Activated CD4-positive, alpha-beta T cell treated with anti-CD3 and anti-CD28 coated beads for 36 hours (primary cell): ENCODE measurements at regions of chr12 and their contacts with region 1.

Region 1: GRCh38 chr12:54279866-54280467 is at the start of gene CBX5:
- DNase-seq: peak; percentile 100
- ATAC-seq: peak; percentile 50
- H3K4me3 Mint-ChIP-seq: no peak within 1 kb of the TSS
- H3K27ac Mint-ChIP-seq: no peak within 1 kb of the TSS
- H3K4me1 Mint-ChIP-seq: peaks cover 52% of the 10 kb centered on the region
- H3K27me3 Mint-ChIP-seq: no peaks in the 10 kb centered on the region
- total RNA-seq, gene CBX5: 140 to 146 TPM

Region 2: DNA sequence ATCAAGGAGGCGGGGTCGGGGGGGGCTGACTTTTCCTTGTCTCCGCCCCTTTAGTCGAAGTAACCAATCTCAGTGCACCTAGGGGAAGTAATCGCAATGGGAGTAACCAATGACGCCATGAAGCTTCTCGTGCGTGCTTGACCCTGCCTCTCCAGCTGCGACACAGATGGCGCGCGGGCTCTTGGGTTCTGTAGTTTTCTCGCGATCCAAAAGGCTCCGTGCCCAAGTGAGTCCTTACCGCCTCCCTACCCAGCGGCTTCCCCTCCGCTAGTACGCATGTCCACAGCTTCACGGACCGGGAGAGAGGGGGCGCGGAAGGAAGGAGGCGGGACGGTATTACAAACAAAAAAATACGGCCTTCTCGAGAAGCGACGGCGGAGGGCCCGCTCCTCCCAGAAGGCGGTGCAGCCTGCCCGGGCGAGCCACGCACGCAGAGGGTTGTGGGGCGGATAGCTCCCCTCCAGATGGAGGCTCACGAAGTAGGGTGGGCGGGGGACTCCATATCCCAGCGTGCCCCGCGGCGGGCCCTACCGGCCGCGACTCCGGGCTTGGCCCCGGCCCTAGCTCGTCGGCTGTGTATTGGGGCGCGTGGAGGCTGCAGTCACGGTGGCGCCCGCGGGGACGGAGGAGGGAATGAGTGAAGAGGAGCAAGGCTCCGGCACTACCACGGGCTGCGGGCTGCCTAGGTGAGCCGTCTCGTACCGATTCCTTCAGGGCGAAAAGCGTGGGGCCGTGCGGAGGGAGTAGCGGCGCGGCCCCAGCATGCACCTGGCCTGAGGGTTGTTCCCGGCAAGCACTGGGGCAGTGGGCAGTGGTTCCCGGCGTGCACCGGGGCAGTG is 779.0 kb before region 1 on chr12 and contains the start of gene TARBP2:
- CTCF ChIA-PET with region 1: no interaction called
- POLR2A ChIA-PET with region 1: no interaction called
- intact Hi-C with region 1: loop called (anchors 2 kb)
- DNase-seq: peak; percentile 98
- ATAC-seq: peak; percentile 84
- H3K4me3 Mint-ChIP-seq: peak within 1 kb of the TSS; percentile 81
- H3K27ac Mint-ChIP-seq: peak within 1 kb of the TSS; percentile 98
- H3K4me1 Mint-ChIP-seq: peaks cover 31% of the 10 kb centered on the region
- H3K27me3 Mint-ChIP-seq: no peaks in the 10 kb centered on the region
- total RNA-seq, gene TARBP2: 28.3 to 30.2 TPM

Region 3: GRCh38 chr12:53952871-53953734 is 326.9 kb before region 1 on chr12:
- CTCF ChIA-PET with region 1: no interaction called
- POLR2A ChIA-PET with region 1: no interaction called
- intact Hi-C with region 1: no loop called
- DNase-seq: no peak
- ATAC-seq: no peak
- H3K4me3 Mint-ChIP-seq: no peak overlapping the region
- H3K27ac Mint-ChIP-seq: no peak overlapping the region
- H3K4me1 Mint-ChIP-seq: peaks cover 12% of the 10 kb centered on the region
- H3K27me3 Mint-ChIP-seq: peaks cover 85% of the 10 kb centered on the region

Region 4: GRCh38 chr12:54191550-54192022 is 88.4 kb before region 1 on chr12:
- CTCF ChIA-PET with region 1: no interaction called
- POLR2A ChIA-PET with region 1: no interaction called
- intact Hi-C with region 1: loop called in 1 of 2 experiments (anchors 1 kb)
- DNase-seq: peak; percentile 87
- ATAC-seq: peak; percentile 60
- H3K4me3 Mint-ChIP-seq: no peak overlapping the region
- H3K27ac Mint-ChIP-seq: no peak overlapping the region
- H3K4me1 Mint-ChIP-seq: peaks cover 17% of the 10 kb centered on the region
- H3K27me3 Mint-ChIP-seq: peaks cover 35% of the 10 kb centered on the region

Region 5: DNA sequence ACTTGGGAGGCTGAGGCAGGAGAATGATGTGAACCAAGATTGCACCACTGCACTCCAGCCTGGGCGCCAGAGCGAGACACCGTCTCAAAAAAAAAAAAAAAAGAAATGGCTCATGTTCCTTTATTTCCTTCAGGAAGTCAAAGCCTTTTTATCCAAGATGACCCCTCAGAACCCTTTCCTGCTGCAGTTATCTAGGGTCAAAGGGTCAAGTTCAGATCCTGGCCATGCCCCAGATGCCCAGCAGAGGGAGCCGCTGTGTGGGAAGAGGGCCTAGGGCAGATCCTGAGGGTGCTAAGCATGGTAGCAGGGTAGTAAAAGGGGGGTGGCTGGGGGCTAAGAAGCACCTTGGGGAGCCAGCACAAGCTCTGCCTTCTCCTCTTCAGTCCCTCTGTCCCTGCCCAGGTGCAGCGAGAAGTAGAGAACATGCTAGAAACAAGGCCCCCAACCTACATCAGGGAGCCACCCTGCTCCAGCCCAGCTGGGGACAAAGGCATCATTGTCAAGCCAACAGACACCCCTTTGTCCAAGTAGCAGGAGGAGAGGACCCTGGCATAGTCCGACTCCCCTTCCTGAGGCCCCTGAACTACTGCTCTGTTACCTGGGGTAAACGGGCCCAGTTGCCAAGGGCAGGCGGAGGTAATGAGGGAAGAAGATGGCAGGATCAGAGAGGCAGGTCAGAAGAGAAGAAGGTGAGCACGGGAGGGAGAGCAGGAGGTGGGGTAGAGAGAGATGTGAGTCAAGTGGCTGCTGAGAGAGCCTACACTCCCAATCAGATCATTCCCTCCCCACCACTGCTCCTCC is 14.4 kb after region 1 on chr12:
- CTCF ChIA-PET with region 1: interaction called, 16 read pairs
- POLR2A ChIA-PET with region 1: interaction called, 7 read pairs
- intact Hi-C with region 1: no loop called
- DNase-seq: peak; percentile 83
- ATAC-seq: peak; percentile 82
- H3K4me3 Mint-ChIP-seq: no peak overlapping the region
- H3K27ac Mint-ChIP-seq: no peak overlapping the region
- H3K4me1 Mint-ChIP-seq: peaks cover 5% of the 10 kb centered on the region
- H3K27me3 Mint-ChIP-seq: peaks cover 10% of the 10 kb centered on the region

Region 6: GRCh38 chr12:54497883-54498282 is 217.9 kb after region 1 on chr12:
- CTCF ChIA-PET with region 1: no interaction called
- POLR2A ChIA-PET with region 1: no interaction called
- intact Hi-C with region 1: loop called in 1 of 2 experiments (anchors 2 kb)
- DNase-seq: no peak
- ATAC-seq: peak; percentile 4
- H3K4me3 Mint-ChIP-seq: peak overlapping the region; percentile 99
- H3K27ac Mint-ChIP-seq: peak overlapping the region; percentile 98
- H3K4me1 Mint-ChIP-seq: peaks cover 39% of the 10 kb centered on the region
- H3K27me3 Mint-ChIP-seq: no peaks in the 10 kb centered on the region